AG04449 (cell line): ENCODE measurements at regions of chr9 and their contacts with region 1.

Region 1: DNA sequence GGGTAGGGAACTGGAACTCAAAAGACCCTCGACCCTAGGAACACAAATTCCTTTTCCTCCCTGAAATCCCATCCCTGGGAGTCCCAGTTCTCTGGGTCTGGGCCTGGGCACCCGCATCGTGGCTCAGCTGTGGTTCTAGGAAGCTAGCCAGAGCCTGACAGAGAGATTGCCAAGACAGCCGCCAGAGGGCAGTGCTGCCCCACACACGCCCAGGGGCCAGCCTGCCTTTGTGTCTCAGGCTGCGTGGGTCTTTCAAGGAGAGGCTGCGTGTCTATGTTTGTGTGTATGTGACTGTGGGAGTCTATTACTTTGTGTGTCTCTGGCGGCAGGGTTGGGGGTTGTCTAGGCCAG is 32.0 kb upstream of the TTLL11 start:
- DNase-seq: peak; percentile 17
- H3K4me3 ChIP-seq: no peak overlapping the region
- CTCF ChIP-seq: peak; percentile 93

Region 2: DNA sequence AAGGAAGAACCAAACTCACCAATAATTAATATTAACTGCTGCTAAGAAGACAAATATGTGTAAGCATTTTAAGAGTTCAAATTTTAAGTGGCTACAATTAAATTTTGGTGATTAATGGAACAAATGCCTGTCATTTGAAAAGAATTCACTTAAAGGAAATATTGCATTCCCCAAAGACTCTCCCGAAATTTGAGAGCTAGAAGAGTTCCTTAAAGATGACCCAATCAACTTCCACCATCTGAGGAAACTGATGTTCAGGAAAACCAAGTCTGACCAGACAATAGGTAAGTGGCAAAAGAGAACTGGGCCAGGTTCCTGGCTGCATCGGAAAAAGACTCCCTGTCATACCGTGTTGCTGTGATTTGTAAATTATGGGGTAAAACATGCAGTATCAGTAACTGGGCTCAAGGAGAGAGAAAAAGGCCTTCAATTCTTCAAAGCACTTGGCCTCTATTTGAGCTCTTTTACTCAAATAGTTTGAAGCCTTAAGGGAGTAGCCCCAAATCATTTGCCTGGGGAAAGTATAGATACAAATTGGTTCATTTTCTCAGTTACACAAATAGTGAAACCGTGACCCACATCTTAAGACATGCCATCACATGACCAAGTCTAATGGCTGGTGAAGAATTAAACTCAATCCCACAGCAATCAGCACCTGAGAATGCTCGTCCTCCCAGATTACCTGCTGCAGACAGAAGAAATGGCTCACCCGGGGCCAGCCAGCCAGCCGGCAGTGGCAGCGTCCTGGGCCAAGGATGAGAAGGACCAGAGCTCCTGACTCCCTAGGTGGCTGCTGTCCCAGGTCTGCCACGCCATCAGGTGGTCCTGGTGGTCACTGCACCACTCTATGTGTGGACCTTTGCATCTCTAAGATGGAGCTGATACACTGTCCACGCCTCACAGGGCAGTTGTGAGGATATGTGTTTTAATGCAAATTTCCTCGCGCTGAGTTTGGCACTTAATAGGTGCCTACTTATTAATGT is 194.9 kb before region 1 on chr9:
- CTCF ChIA-PET with region 1: no interaction called
- POLR2A ChIA-PET with region 1: no interaction called
- DNase-seq: no peak
- H3K4me3 ChIP-seq: no peak overlapping the region
- CTCF ChIP-seq: no peak

Region 3: DNA sequence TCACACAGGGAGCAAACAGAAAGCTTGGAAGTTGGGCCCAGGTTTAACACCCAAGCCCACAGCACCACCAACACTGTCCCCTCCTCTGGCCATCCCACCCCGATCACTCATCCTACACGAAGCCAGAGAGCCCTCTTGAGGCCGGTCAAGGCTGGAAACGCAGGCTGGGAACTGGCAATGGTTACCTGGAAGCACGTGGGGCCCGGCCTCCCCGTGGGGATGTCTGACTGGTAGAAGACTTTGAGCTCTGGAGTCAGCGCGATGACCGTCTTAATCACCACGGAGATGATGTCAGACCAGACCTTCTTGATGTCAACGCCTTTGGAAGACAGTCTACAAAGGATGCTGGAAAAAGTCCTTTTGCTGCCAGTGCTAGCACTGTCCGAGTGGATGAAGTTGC is 136.1 kb before region 1 on chr9:
- CTCF ChIA-PET with region 1: no interaction called
- POLR2A ChIA-PET with region 1: no interaction called
- DNase-seq: no peak
- H3K4me3 ChIP-seq: no peak overlapping the region
- CTCF ChIP-seq: peak; percentile 49

Region 4: GRCh38 chr9:122051351-122052321 is 73.5 kb before region 1 on chr9:
- CTCF ChIA-PET with region 1: no interaction called
- POLR2A ChIA-PET with region 1: no interaction called
- DNase-seq: peak; percentile 41
- H3K4me3 ChIP-seq: no peak overlapping the region
- CTCF ChIP-seq: no peak

Region 5: DNA sequence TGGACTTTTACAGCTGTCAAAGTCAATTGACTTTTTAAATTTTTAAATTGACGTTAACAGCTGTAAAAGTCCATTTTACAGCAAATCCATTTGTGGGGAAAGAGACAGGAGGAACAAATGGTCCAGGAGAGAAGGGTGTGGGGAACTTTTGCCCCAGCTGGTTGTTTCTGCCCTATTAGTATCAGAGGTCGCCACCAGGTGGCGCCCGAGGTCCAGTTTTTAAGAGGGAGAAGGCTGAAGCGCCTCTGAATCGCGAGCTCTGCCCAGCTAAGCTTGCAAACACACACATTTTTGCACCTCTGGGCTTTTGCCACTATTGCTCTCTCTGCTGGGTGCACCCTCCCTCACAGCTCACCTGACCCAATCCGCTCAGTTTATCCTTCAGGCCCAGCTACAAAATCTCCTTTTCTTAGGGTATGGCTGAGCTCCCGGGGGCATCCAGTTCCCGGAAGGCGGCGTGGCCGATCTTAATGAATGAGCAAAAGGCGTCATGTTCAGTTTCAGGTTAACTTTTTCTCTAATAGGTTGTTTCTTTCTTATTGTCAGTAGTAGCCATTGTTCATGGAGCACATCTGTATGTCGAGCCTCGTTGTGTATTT is 25.8 kb before region 1 on chr9:
- CTCF ChIA-PET with region 1: interaction called, 692 read pairs
- POLR2A ChIA-PET with region 1: interaction called, 4 read pairs
- DNase-seq: no peak
- H3K4me3 ChIP-seq: no peak overlapping the region
- CTCF ChIP-seq: peak; percentile 73

Region 6: DNA sequence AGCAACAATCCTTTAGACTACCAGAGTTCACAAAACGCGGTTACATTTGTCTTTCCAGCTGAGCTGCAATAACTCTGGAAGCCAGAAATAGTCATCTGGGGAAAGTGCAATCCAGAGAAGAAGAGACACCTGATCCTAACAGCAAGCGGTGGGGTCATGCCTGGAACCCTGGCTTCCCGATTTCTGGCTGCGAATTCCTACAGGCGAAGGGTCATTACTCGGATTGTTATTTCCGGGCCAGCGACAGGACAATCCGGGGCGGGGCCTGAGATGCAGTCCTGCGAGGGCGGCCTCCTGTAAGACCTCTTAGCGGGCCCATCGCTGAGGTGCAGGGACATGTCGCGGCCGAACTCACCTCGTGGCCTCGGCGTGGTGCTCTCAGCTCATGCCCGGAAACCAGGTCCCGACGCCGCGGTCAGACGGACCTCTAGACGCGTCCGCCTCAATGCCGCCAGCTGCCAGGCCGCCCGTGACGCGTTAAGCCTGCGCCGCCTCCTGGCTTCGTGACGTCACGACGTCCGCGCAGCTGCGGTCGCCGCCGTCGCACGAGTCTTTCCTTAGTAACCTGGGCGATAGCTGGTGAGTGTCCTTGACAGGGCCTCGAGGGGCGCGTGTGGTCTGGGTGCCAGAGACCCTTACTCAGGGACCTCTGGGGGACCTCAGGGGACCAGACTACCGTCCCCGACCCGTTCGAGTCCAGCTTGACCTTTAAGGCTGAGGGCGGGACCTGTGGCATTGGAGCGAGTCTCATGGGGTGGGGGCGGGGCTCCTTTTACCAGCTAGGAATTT is 139.4 kb after region 1 on chr9 and contains the starts of genes MRRF and RBM18:
- CTCF ChIA-PET with region 1: interaction called, 15 read pairs
- POLR2A ChIA-PET with region 1: no interaction called
- DNase-seq: peak; percentile 41
- H3K4me3 ChIP-seq: peak within 1 kb of the TSS; percentile 96
- CTCF ChIP-seq: no peak

Region 7: DNA sequence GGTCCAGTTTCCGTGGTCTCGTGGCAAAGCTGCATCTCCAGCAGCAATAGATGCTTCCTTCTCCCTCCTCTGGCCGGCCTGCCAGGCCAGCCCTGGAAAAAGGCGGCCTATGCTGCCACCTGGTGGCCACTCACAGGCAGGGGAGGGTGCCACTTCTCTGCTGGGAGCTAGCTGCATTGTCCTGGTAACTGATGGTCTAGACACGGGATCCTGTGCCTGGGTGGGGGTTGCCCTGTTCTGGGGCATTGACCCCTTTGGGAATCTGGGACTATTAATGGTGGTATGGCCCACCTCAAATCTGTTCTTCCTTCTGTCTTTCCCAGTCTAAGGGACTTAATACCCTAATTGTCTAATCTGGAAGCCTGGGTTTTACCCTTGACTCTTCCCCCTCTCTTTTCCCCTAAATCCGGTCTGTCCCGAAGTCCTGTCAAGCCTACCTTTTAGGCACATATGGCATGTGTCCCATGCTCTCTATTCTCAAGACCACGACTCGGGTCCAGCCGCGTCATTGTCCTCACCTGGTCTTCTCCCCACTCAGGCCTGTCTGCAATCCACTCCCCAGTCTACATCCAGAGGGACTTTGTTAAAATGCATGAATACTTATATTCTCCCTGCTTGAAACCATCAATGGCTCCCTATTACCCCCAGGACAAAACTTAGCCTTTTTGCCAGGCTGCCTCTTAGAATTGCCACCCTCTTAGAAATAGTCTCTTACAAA is 225.7 kb after region 1 on chr9:
- CTCF ChIA-PET with region 1: interaction called, 831 read pairs
- POLR2A ChIA-PET with region 1: interaction called, 9 read pairs
- DNase-seq: no peak
- H3K4me3 ChIP-seq: no peak overlapping the region
- CTCF ChIP-seq: peak; percentile 95

Region 8: GRCh38 chr9:122374885-122375420 is 249.8 kb after region 1 on chr9:
- CTCF ChIA-PET with region 1: interaction called, 19 read pairs
- POLR2A ChIA-PET with region 1: no interaction called
- DNase-seq: no peak
- H3K4me3 ChIP-seq: no peak overlapping the region
- CTCF ChIP-seq: no peak

Region 9: DNA sequence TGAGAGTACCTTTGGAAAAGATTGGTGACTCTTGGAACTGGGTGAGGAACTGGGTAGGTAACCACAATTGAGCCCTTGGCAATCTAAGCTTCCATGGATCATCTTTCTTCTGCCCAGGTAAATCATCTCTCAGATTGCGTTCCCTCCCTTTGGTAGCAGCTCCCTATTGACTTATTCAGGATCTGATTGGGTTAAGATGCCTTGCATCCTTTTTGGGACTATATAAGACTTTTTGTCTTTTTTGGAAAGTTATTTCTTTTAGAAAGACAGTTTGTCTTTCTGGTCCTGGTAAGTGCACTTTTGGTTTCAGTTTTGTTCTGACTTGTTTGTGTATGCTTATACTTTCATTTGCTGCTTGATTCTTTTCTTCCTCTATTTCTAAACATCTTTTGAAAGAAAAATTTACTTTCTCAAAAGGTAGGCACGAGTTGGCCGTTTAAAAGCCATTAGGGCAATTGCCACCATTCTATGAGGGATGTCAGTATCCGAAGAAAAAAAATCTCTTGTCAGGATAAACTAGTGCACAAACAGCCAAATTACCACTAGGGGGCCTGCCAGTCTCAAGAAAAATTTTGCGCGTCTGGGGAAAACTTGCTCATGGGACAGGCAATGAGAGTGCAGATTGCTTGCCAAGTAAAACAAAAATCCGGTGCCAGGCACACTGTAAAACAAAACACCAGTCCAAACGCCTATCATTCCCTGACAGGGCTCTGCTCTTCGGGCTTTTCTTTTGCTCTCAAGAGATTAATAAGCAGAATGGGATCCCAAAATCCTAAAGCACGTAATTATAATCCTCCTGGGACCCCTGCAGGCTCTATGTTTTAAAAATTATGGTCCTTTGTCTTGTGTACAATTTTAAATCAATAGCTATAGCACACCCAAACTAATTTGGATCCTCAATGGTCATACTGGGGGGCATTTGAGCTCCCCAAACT is 339.8 kb after region 1 on chr9:
- CTCF ChIA-PET with region 1: interaction called, 30 read pairs
- POLR2A ChIA-PET with region 1: no interaction called
- DNase-seq: peak; percentile 64
- H3K4me3 ChIP-seq: peak overlapping the region; percentile 47
- CTCF ChIP-seq: peak; percentile 66